Naive thymus-derived CD4-positive, alpha-beta T cell (primary cell): ENCODE measurements at regions of chr4 and their contacts with region 1.

Region 1: GRCh38 chr4:1346781-1347409 is at the start of gene UVSSA:
- DNase-seq: peak; percentile 100
- ATAC-seq: peak; percentile 96
- H3K4me3 ChIP-seq: peak within 1 kb of the TSS; percentile 87
- H3K4me3 Mint-ChIP-seq: peak within 1 kb of the TSS; percentile 86 to 99 (median 95)
- H3K27ac ChIP-seq: peak within 1 kb of the TSS; percentile 94
- H3K27ac Mint-ChIP-seq: peak within 1 kb of the TSS; percentile 83 to 99 (median 95)
- H3K4me1 ChIP-seq: peaks cover 14 to 19% of the 10 kb centered on the region in 2 donors
- H3K4me1 Mint-ChIP-seq: peaks cover 34 to 53% (median 42%) of the 10 kb centered on the region in 7 donors
- H3K27me3 ChIP-seq: no peaks in the 10 kb centered on the region
- H3K27me3 Mint-ChIP-seq: no peaks in the 10 kb centered on the region
- total RNA-seq, gene UVSSA: 29.5 to 44.1 (median 39.7) TPM

Region 2: DNA sequence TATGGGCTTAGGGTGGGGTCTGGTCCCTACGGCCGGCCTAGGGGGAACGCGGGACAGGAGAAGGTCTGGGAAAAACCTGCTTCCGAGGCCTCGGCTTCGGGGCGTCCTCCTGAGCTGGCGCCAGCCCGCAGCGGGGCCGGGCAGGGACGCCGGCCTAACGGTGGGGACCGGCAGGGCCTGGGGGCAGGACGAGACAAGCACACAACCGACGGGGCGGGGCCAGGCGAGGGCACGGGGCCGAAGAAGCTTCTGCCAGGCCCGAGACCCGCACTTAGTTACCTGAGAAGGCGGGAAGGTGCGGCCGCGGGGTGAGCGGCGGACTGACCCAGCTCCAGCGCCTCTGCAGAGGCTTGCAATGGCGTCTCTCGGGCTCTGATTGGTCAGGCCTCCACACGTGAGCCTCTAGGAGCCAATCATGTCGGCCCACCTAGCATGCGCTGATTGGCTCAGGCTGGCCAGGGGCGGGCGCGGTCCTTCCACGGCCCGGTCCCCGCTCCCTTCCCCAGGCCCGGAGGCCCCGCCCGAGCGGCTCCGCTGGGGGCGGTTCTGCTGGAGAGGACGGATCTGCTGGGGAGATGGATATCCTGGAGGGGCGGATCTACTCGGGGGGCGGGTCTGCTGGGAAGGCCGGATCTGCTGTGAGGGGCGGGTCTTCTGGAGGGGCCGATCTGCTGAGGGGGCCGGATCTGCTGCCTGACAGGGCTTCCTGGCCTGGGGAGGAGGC is 565.2 kb before region 1 on chr4:
- CTCF ChIA-PET with region 1: no interaction called
- POLR2A ChIA-PET with region 1: no interaction called
- intact Hi-C with region 1: loop called (anchors 2 to 5 kb)
- DNase-seq: peak; percentile 96 to 99 (median 98)
- ATAC-seq: peak; percentile 96
- H3K4me3 ChIP-seq: peak overlapping the region; percentile 83
- H3K4me3 Mint-ChIP-seq: peak overlapping the region; percentile 84 to 97 (median 90)
- H3K27ac ChIP-seq: peak overlapping the region; percentile 90
- H3K27ac Mint-ChIP-seq: peak overlapping the region; percentile 81 to 98 (median 95)
- H3K4me1 ChIP-seq: peaks cover 29% of the 10 kb centered on the region in 2 donors
- H3K4me1 Mint-ChIP-seq: peaks cover 42 to 62% (median 47%) of the 10 kb centered on the region in 7 donors
- H3K27me3 ChIP-seq: peaks cover 0 to 6% of the 10 kb centered on the region in 2 donors
- H3K27me3 Mint-ChIP-seq: peaks cover 10 to 22% (median 16%) of the 10 kb centered on the region in 5 donors

Region 3: DNA sequence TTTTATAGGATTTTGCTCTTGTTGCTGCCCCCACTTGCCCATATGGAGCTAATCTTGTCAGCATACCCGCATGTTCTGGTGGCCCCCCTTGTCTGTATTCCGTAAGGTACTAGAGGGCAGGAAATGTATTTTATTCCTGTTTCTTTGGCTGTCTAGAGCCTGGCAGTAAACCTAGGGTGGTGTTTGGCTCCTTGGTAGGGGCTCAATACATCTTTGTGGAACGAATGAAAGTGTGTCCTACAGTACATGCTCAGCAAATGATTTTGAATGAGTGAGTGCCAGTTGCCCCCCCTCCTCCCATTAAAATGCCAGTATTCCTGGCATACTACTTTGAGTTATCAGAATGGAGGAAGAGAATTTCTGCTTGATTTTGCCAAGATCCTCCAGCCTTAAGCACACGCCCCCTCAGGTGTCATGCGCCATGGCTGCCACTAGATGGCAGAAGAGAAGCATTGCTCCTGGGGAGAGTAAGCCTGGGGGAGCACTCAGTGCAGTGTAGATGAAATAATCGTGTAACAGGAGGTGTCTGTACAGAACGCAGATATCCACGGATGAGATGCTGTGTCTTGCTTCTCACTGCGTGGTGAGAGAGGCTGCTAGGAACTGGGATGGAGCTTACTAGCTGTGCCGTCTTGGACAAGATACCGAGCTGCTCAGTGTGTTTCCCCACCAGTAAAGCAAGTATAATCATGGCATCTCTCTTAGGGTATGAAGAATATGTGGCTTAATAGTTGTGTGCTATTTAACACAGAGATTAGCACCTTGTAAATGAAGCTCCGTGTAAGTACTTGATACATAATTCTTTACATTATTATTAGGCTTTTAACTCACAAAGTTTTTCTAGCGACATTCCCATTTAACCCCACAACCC is 216.3 kb before region 1 on chr4:
- CTCF ChIA-PET with region 1: interaction called, 12 read pairs
- POLR2A ChIA-PET with region 1: no interaction called
- intact Hi-C with region 1: loop called (anchors 1 kb)
- DNase-seq: peak; percentile 55 to 86 (median 75)
- ATAC-seq: peak; percentile 100
- H3K4me3 ChIP-seq: no peak overlapping the region
- H3K4me3 Mint-ChIP-seq: peak overlapping the region in 1 of 10 donors; percentile 46
- H3K27ac ChIP-seq: no peak overlapping the region
- H3K27ac Mint-ChIP-seq: no peak overlapping the region
- H3K4me1 ChIP-seq: no peaks in the 10 kb centered on the region
- H3K4me1 Mint-ChIP-seq: peaks cover 0 to 9% (median 4%) of the 10 kb centered on the region in 7 donors
- H3K27me3 ChIP-seq: no peaks in the 10 kb centered on the region
- H3K27me3 Mint-ChIP-seq: peaks cover 0 to 24% (median 6%) of the 10 kb centered on the region in 5 donors

Region 4: GRCh38 chr4:1266881-1267763 is 79.8 kb before region 1 on chr4:
- CTCF ChIA-PET with region 1: interaction called, 8 read pairs
- POLR2A ChIA-PET with region 1: interaction called, 11 read pairs
- intact Hi-C with region 1: loop called in 1 of 2 experiments (anchors 5 kb)
- DNase-seq: peak in 5 of 9 donors; percentile 36 to 59 (median 48)
- ATAC-seq: peak; percentile 73
- H3K4me3 ChIP-seq: peak overlapping the region; percentile 53
- H3K4me3 Mint-ChIP-seq: peak overlapping the region; percentile 49 to 87 (median 72)
- H3K27ac ChIP-seq: peak overlapping the region; percentile 45
- H3K27ac Mint-ChIP-seq: peak overlapping the region; percentile 40 to 96 (median 82)
- H3K4me1 ChIP-seq: peaks cover 0 to 7% of the 10 kb centered on the region in 2 donors
- H3K4me1 Mint-ChIP-seq: peaks cover 8 to 22% (median 15%) of the 10 kb centered on the region in 7 donors
- H3K27me3 ChIP-seq: no peaks in the 10 kb centered on the region
- H3K27me3 Mint-ChIP-seq: no peaks in the 10 kb centered on the region

Region 5: DNA sequence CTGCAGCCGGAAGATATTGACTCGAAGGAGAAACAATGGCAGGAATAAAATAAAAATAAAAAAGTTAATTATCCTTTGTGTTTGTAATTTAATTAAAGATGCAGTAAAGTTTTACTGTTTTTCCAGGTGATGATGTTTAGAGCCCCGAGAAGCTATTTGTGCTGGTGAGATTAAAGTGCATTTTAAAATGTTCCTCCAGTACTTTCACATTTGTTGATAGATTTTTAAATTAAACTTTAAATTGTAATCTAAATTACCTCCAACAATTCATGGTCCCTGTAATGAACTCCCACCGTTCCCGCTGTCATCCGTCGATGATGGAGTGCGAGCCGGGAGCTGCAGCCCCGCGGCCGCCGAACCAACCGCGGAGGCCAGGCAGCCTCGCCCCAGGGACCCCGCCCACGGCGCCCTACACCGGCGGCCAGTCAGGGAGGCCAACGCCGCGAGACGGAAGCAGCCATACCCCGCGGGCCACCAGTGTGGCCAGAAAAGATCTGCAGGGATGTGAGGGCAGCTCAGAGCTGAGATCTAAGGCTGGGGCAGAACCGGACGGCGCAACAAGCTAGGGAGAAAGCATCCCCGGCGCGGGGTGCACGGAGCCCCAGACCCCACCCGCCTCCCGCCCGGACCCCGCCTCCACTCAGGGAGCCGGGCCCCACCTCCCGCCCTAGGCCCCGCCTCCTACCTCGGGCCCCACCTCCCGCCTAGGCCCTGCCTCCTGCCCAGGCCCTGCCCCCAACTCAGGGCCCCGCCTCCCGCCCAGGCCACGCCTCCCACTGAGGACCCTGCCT is 233.2 kb after region 1 on chr4:
- CTCF ChIA-PET with region 1: no interaction called
- POLR2A ChIA-PET with region 1: interaction called, 8 read pairs
- intact Hi-C with region 1: loop called (anchors 1 to 2 kb)
- DNase-seq: peak; percentile 85 to 97 (median 93)
- ATAC-seq: peak; percentile 90
- H3K4me3 ChIP-seq: peak overlapping the region; percentile 70
- H3K4me3 Mint-ChIP-seq: peak overlapping the region; percentile 73 to 87 (median 80)
- H3K27ac ChIP-seq: peak overlapping the region; percentile 73
- H3K27ac Mint-ChIP-seq: peak overlapping the region; percentile 18 to 79 (median 55)
- H3K4me1 ChIP-seq: peaks cover 0 to 5% of the 10 kb centered on the region in 2 donors
- H3K4me1 Mint-ChIP-seq: peaks cover 0 to 14% (median 10%) of the 10 kb centered on the region in 7 donors
- H3K27me3 ChIP-seq: no peaks in the 10 kb centered on the region
- H3K27me3 Mint-ChIP-seq: no peaks in the 10 kb centered on the region

Region 6: GRCh38 chr4:1721004-1721665 is 374.2 kb after region 1 on chr4 and contains the starts of genes TACC3 and TMEM129:
- CTCF ChIA-PET with region 1: no interaction called
- POLR2A ChIA-PET with region 1: interaction called, 6 read pairs
- intact Hi-C with region 1: loop called in 1 of 2 experiments (anchors 1 kb)
- DNase-seq: peak; percentile 79 to 97 (median 95)
- ATAC-seq: peak; percentile 92
- H3K4me3 ChIP-seq: peak within 1 kb of the TSS; percentile 70
- H3K4me3 Mint-ChIP-seq: peak within 1 kb of the TSS; percentile 79 to 97 (median 93)
- H3K27ac ChIP-seq: peak within 1 kb of the TSS; percentile 88
- H3K27ac Mint-ChIP-seq: peak within 1 kb of the TSS; percentile 98 to 100 (median 99)
- H3K4me1 ChIP-seq: peaks cover 45 to 52% of the 10 kb centered on the region in 2 donors
- H3K4me1 Mint-ChIP-seq: peaks cover 25 to 56% (median 52%) of the 10 kb centered on the region in 7 donors
- H3K27me3 ChIP-seq: no peaks in the 10 kb centered on the region
- H3K27me3 Mint-ChIP-seq: no peaks in the 10 kb centered on the region
- total RNA-seq, gene TACC3: 100 to 165 (median 162) TPM
- total RNA-seq, gene TMEM129: 20.0 to 41.1 (median 26.7) TPM

Region 7: DNA sequence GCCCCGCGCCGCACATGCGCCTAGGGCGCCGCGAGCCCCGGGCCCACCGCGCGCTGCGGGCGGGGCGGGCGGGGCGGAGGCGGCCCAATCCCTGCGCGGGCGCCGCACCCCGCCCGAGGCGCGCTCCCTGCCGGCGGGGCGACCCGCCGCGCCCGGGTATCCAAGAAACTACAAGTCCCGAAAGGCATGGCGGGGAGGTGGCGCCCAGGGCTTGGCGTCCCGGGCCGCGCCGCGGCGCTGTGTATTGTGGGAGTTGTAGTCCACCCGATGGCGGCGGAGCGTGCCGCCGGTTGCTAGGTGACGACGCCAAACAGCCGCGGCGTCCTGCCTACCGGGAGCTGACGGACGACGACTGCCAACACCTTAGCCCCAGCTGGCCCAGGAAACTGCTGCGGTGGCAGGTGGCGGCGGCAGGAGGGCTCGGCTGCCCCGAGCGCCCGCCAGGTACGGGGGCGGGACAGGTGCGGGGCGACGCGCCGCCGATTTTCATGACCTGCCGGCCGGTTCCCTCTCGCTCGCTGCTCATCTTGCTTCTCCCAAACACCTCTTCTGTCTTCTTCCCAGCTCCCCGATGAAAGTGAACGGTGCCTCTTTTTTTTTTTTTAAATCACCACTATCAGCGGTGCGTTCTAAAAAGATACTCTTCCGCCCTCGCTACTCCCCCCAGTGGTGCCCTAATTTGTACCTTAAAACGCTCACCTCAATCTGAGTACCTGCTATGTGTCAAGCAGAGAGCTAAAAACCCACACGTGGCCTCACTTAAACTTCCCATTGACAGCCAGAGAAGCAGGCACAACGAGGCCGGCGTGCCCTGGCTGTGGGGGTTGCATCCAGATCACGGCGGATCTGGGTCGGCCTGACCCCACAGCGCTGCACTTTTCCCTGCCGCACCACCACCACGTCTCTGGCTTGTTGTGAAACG is 1072.0 kb after region 1 on chr4 and contains the start of gene CFAP99:
- CTCF ChIA-PET with region 1: no interaction called
- POLR2A ChIA-PET with region 1: no interaction called
- intact Hi-C with region 1: loop called in 1 of 2 experiments (anchors 2 kb)
- DNase-seq: peak; percentile 89 to 97 (median 93)
- ATAC-seq: peak; percentile 95
- H3K4me3 ChIP-seq: peak within 1 kb of the TSS; percentile 70
- H3K4me3 Mint-ChIP-seq: peak within 1 kb of the TSS; percentile 85 to 98 (median 92)
- H3K27ac ChIP-seq: peak within 1 kb of the TSS; percentile 73
- H3K27ac Mint-ChIP-seq: peak within 1 kb of the TSS; percentile 81 to 98 (median 90)
- H3K4me1 ChIP-seq: peaks cover 24 to 28% of the 10 kb centered on the region in 2 donors
- H3K4me1 Mint-ChIP-seq: peaks cover 33 to 46% (median 40%) of the 10 kb centered on the region in 7 donors
- H3K27me3 ChIP-seq: no peaks in the 10 kb centered on the region
- H3K27me3 Mint-ChIP-seq: peaks cover 8 to 67% (median 13%) of the 10 kb centered on the region in 5 donors
- total RNA-seq, gene CFAP99: 0.12 to 0.27 TPM in 2 of 5 experiments, not detected in the others